ENCODE measurements at regions of chr3 and their contacts with region 1.

Region 1: GRCh38 chr3:185929192-185930151 is 8.3 kb downstream of the TRA2B start:
- DNase-seq: no peak
- H3K4me3 ChIP-seq: no peak overlapping the region
- CTCF ChIP-seq: no peak
- POLR2A ChIP-seq: no peak

Region 2: GRCh38 chr3:185758912-185759311 is 170.6 kb before region 1 on chr3:
- intact Hi-C with region 1: loop called (anchors 5 kb)
- DNase-seq: no peak
- H3K4me3 ChIP-seq: no peak overlapping the region
- CTCF ChIP-seq: no peak
- POLR2A ChIP-seq: no peak

Region 3: GRCh38 chr3:186162221-186162620 is 232.7 kb after region 1 on chr3:
- intact Hi-C with region 1: no loop called
- DNase-seq: no peak
- H3K4me3 ChIP-seq: no peak overlapping the region
- CTCF ChIP-seq: no peak
- POLR2A ChIP-seq: no peak

Measured in lower leg skin (tissue), 4 donors.